H1 (cell line): ENCODE measurements at regions of chr2 and their contacts with region 1.

Region 1: GRCh38 chr2:39851651-39852110 is 72.6 kb upstream of the THUMPD2 start:
- DNase-seq: no peak
- H3K4me3 ChIP-seq: no peak overlapping the region
- H3K27ac ChIP-seq: no peak overlapping the region
- H3K4me1 ChIP-seq: peaks cover 0 to 11% (median 2%) of the 10 kb centered on the region in 4 experiments; a peak in 2 of 7 replicates
- H3K27me3 ChIP-seq: no peaks in the 10 kb centered on the region
- CTCF ChIP-seq: peak in 2 of 3 experiments; percentile 18 to 19; a peak in 2 of 4 replicates
- EP300 ChIP-seq: no peak
- POLR2A ChIP-seq: no peak
- RAD21 ChIP-seq: peak; percentile 32 to 45; a peak in 3 of 4 replicates

Region 2: DNA sequence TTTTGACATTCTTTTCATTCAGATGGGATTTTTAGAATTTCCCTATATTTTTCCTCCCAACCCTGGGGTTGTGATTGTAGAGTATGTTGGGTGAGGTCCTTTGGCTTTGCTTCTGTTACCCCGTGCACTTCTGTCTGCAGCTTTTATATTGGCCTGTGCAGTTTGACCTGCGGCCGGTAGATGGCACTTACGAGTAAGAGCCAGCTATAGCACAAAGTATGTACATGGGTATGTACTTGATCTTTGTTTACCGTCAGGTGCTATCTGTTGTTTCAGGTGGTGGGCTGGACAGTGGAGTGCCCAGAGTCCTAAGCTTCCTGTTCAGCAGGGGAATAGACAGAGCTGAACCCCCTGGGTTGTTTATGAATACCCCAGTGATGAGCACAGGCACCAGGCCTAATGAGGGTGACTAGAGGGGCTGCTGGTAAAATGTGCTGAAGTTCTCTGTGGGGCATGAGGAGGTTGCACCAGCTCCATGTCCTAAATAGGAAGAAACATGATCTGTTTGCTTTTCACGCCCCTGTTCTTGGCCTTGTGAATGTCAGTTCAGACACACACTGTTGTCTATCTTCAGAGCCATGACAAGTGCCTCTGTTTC is 13.7 kb before region 1 on chr2:
- CTCF ChIA-PET with region 1: interaction called, 31 read pairs
- POLR2A ChIA-PET with region 1: no interaction called
- DNase-seq: peak in 1 of 2 experiments; percentile 73
- H3K4me3 ChIP-seq: no peak overlapping the region
- H3K27ac ChIP-seq: no peak overlapping the region
- H3K4me1 ChIP-seq: no peaks in the 10 kb centered on the region
- H3K27me3 ChIP-seq: no peaks in the 10 kb centered on the region
- CTCF ChIP-seq: peak; percentile 60 to 89 (median 63)
- EP300 ChIP-seq: no peak
- POLR2A ChIP-seq: no peak
- RAD21 ChIP-seq: peak; percentile 66 to 75